Ovary (tissue), 10 donors: ENCODE measurements at regions of chr15 and their contacts with region 1.

Region 1: DNA sequence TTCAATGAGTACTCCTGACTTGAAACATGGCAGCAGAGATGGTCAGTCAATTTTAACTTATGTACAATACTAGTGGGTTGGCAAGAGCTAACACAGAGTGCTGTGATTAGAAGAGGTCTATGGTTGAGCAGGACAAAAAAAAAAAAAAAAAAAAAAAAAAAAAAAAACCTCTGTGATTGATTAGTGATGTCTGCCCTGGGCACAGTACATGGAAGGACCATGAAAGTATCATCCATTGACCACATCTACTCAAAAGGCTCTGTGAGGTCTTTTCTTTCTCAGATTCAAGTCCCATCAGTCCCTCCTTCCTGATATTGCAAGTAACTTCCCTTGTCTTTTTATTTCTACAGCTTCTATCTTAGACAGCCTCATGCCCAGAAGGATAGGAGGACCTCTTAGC is 59.6 kb downstream of the NTRK3 start:
- DNase-seq: no peak
- H3K4me3 ChIP-seq: no peak overlapping the region
- H3K27ac ChIP-seq: no peak overlapping the region
- H3K4me1 ChIP-seq: no peaks in the 10 kb centered on the region
- H3K27me3 ChIP-seq: no peaks in the 10 kb centered on the region
- CTCF ChIP-seq: no peak
- EP300 ChIP-seq: no peak
- POLR2A ChIP-seq: no peak

Region 2: GRCh38 chr15:87777054-87777561 is 419.9 kb before region 1 on chr15:
- intact Hi-C with region 1: no loop called
- DNase-seq: no peak
- H3K4me3 ChIP-seq: no peak overlapping the region
- H3K27ac ChIP-seq: no peak overlapping the region
- H3K4me1 ChIP-seq: no peaks in the 10 kb centered on the region
- H3K27me3 ChIP-seq: no peaks in the 10 kb centered on the region
- CTCF ChIP-seq: no peak
- EP300 ChIP-seq: no peak
- POLR2A ChIP-seq: no peak

Region 3: DNA sequence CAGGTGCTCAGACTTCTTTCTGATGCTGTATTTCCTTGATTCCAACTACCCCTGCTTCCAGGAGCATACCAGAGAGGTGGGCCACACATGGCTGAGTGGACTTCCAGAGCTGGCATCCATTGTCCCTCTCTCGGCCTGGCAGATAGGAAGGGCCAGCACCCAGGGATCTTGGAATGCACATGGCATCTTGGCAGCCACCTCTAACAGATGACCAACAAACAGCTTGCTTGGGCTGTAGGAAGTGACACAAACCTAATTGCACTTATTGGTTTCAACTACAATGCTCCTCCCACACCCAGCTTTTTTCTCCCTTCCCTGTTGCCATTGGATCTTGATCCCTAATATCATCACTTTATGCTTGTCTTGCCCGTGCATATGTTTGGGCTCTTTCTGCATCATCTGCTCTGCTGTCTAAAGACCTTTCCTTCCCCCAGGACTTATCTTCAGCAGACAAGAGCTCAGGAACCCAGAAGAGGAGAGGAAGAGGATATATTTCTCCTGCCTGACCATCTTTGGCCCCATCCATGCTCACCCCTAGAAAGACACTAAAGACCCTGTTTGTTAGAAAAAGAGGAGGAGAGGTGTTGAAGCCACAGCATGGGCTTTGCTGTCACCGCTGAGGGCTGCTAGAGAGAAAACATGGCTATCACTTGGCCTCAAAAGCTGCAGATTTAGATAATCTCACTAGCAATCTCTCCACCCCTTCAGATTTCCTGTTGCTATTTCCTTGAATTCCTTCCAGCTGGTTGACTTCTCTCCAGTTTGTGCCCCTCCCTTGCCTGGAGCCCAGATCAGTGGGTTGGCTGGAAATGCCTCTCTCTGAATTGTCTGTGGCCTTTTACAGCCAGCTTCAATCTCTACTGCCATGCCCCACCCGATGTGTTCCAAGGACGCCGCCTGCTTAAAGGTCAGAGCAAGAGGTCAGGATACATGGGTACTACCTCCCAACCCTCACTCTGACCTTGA is 234.8 kb before region 1 on chr15:
- intact Hi-C with region 1: no loop called
- DNase-seq: no peak
- H3K4me3 ChIP-seq: no peak overlapping the region
- H3K27ac ChIP-seq: no peak overlapping the region
- H3K4me1 ChIP-seq: no peaks in the 10 kb centered on the region
- H3K27me3 ChIP-seq: no peaks in the 10 kb centered on the region
- CTCF ChIP-seq: no peak
- EP300 ChIP-seq: no peak
- POLR2A ChIP-seq: no peak

Region 4: DNA sequence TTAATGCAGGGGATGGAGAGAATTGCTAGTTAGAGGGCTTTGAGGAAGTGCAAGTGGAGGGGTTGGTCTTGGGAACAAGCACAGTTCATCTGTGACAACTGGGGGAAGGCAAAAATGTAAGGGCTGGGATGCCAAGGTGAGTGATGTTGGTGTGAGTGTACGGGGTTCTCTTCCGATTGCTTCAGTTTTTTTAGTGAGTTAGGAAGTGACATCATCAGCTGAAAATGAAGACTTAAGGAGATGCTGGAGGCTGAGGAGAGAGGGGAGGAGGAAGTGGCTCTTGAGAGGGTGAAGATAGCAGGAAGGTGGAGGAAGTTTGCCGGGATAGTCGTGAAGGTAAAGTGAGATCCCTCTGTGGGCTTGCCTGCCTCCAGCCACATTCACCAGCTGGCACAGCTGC is 1391.0 kb after region 1 on chr15:
- intact Hi-C with region 1: loop called in 1 of 4 experiments (anchors 5 kb)
- DNase-seq: no peak
- H3K4me3 ChIP-seq: no peak overlapping the region
- H3K27ac ChIP-seq: no peak overlapping the region
- H3K4me1 ChIP-seq: no peaks in the 10 kb centered on the region
- H3K27me3 ChIP-seq: no peaks in the 10 kb centered on the region
- CTCF ChIP-seq: no peak
- EP300 ChIP-seq: no peak
- POLR2A ChIP-seq: no peak